CD4-positive, alpha-beta T cell (primary cell): ENCODE measurements at regions of chr1 and their contacts with region 1.

Region 1: GRCh38 chr1:25520446-25521061 is 22.9 kb upstream of the LDLRAP1 start:
- DNase-seq: peak; percentile 58 to 89 (median 72)
- ATAC-seq: peak; percentile 72
- H3K4me3 ChIP-seq: no peak overlapping the region
- H3K4me3 Mint-ChIP-seq: no peak overlapping the region
- H3K27ac ChIP-seq: no peak overlapping the region
- H3K27ac Mint-ChIP-seq: peak overlapping the region; percentile 47
- H3K4me1 ChIP-seq: peaks cover 8% of the 10 kb centered on the region
- H3K4me1 Mint-ChIP-seq: peaks cover 10% of the 10 kb centered on the region
- H3K27me3 ChIP-seq: no peaks in the 10 kb centered on the region
- H3K27me3 Mint-ChIP-seq: no peaks in the 10 kb centered on the region
- CTCF ChIP-seq: peak; percentile 84

Region 2: DNA sequence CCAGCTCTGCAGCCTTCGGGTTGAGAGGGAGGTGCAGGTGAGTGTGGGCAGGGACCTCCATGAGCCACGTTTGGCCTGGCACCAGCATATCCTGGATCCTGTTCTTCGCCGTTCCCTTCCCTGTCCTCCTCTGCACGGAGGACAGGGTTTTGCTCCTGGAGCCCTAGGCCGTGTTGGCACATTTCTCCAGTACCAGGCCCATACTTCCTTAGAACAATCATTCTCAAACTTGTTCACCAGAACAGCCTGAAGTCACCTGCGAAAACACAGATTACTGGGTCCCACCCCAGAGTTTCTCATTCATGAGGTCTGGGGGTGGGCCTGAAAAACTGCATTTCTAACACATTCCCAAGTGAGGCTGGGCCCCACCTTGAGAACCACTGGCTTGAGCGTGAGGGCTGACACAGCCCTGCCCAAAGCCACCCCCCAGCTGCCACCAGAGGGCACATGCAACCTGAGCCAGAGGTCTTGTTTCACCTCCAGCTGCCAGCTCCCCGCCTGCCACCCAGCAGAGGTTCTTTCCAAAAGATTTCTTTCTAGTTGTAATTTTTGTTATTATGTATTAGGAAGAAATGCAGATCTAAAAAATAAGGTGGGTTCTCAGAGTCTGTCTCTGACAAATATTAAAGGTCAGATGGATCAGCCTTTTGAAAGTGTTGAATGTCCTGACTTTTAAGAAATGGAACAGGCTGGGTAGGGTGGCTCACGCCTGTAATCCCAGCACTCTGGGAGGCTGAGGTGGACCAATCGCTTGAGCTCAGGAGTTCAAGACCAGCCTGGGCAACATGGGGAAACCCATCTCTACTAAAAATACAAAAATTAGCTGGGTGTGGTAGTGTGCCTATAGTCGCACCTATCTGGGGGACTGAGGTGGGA is 16.8 kb before region 1 on chr1:
- CTCF ChIA-PET with region 1: interaction called, 15 read pairs
- POLR2A ChIA-PET with region 1: interaction called, 34 read pairs
- intact Hi-C with region 1: loop called in 1 of 2 experiments (anchors 1 kb)
- DNase-seq: peak; percentile 66 to 84 (median 76)
- ATAC-seq: peak; percentile 96
- H3K4me3 ChIP-seq: no peak overlapping the region
- H3K4me3 Mint-ChIP-seq: no peak overlapping the region
- H3K27ac ChIP-seq: no peak overlapping the region
- H3K27ac Mint-ChIP-seq: peak overlapping the region; percentile 84
- H3K4me1 ChIP-seq: peaks cover 27% of the 10 kb centered on the region
- H3K4me1 Mint-ChIP-seq: peaks cover 34% of the 10 kb centered on the region
- H3K27me3 ChIP-seq: no peaks in the 10 kb centered on the region
- H3K27me3 Mint-ChIP-seq: no peaks in the 10 kb centered on the region
- CTCF ChIP-seq: peak; percentile 86

Region 3: GRCh38 chr1:25560001-25560400 is 39.4 kb after region 1 on chr1:
- CTCF ChIA-PET with region 1: no interaction called
- POLR2A ChIA-PET with region 1: no interaction called
- intact Hi-C with region 1: no loop called
- DNase-seq: peak in 3 of 14 experiments; percentile 37 to 54 (median 38)
- ATAC-seq: no peak
- H3K4me3 ChIP-seq: no peak overlapping the region
- H3K4me3 Mint-ChIP-seq: peak overlapping the region; percentile 68
- H3K27ac ChIP-seq: peak overlapping the region; percentile 83 to 86
- H3K27ac Mint-ChIP-seq: peak overlapping the region; percentile 87
- H3K4me1 ChIP-seq: peaks cover 99% of the 10 kb centered on the region
- H3K4me1 Mint-ChIP-seq: peaks cover 93% of the 10 kb centered on the region
- H3K27me3 ChIP-seq: no peaks in the 10 kb centered on the region
- H3K27me3 Mint-ChIP-seq: no peaks in the 10 kb centered on the region
- CTCF ChIP-seq: no peak